K562 (cell line): ENCODE measurements at regions of chr3 and their contacts with region 1.

Region 1: GRCh38 chr3:155313300-155313699 is 19.8 kb upstream of the STRIT1 start:
- DNase-seq: no peak
- ATAC-seq: no peak
- H3K4me3 ChIP-seq: no peak overlapping the region
- H3K27ac ChIP-seq: no peak overlapping the region
- H3K4me1 ChIP-seq: no peaks in the 10 kb centered on the region
- H3K27me3 ChIP-seq: no peaks in the 10 kb centered on the region
- CTCF ChIP-seq: no peak
- EP300 ChIP-seq: no peak
- POLR2A ChIP-seq: no peak
- RAD21 ChIP-seq: no peak

Region 2: GRCh38 chr3:154766765-154767503 is 546.4 kb before region 1 on chr3:
- CTCF ChIA-PET with region 1: no interaction called
- POLR2A ChIA-PET with region 1: no interaction called
- in situ Hi-C with region 1: loop called (anchors 10 kb)
- intact Hi-C with region 1: no loop called
- DNase-seq: peak in 1 of 4 experiments; percentile 27
- ATAC-seq: peak; percentile 82
- H3K4me3 ChIP-seq: no peak overlapping the region
- H3K27ac ChIP-seq: no peak overlapping the region
- H3K4me1 ChIP-seq: peaks cover 0 to 6% of the 10 kb centered on the region in 2 experiments; a peak in 2 of 5 replicates
- H3K27me3 ChIP-seq: peaks cover 0 to 2% of the 10 kb centered on the region in 2 experiments; a peak in 1 of 5 replicates
- CTCF ChIP-seq: no peak
- EP300 ChIP-seq: no peak
- POLR2A ChIP-seq: no peak
- RAD21 ChIP-seq: no peak

Region 3: DNA sequence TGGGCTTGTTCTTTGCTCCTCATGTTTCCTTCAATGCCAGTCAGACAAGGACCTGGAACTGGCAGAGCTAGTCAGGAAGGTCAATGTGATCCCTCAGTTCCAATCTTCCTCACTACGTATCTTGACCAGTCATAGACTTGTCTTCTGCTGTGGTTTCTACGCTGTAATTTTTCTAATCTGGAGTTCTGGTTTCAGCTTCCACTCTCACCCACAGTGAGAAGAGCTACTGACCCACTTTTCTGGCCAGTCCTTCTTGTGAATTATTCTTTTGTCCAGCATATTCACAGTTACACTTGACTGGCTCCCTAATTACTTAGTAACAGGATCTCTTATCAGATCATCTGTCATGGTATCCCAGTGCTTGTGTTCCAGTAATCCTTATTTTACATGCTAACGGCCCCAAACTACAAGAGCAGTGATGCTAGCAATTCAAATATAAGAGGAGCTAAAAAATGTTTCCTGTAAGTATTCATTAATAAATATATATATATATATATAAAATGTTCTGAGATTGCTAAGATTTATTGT is 305.6 kb before region 1 on chr3:
- CTCF ChIA-PET with region 1: no interaction called
- POLR2A ChIA-PET with region 1: no interaction called
- in situ Hi-C with region 1: no loop called
- intact Hi-C with region 1: no loop called
- DNase-seq: no peak
- ATAC-seq: no peak
- H3K4me3 ChIP-seq: no peak overlapping the region
- H3K27ac ChIP-seq: no peak overlapping the region
- H3K4me1 ChIP-seq: peaks cover 0 to 11% of the 10 kb centered on the region in 2 experiments; a peak in 3 of 5 replicates
- H3K27me3 ChIP-seq: no peaks in the 10 kb centered on the region
- CTCF ChIP-seq: no peak
- EP300 ChIP-seq: no peak
- POLR2A ChIP-seq: no peak
- RAD21 ChIP-seq: no peak

Region 4: GRCh38 chr3:155252535-155252934 is 60.8 kb before region 1 on chr3:
- CTCF ChIA-PET with region 1: no interaction called
- POLR2A ChIA-PET with region 1: no interaction called
- in situ Hi-C with region 1: no loop called
- intact Hi-C with region 1: loop called (anchors 10 kb)
- DNase-seq: peak in 1 of 4 experiments; percentile 54
- ATAC-seq: peak; percentile 73
- H3K4me3 ChIP-seq: no peak overlapping the region
- H3K27ac ChIP-seq: peak overlapping the region; percentile 12; the same call in 1 of the 3 replicates
- H3K4me1 ChIP-seq: peaks cover 4 to 22% of the 10 kb centered on the region in 2 experiments; a peak in 3 of 5 replicates
- H3K27me3 ChIP-seq: no peaks in the 10 kb centered on the region
- CTCF ChIP-seq: no peak
- EP300 ChIP-seq: no peak
- POLR2A ChIP-seq: no peak
- RAD21 ChIP-seq: no peak; a peak in 1 of 4 replicates